ENCODE measurements at regions of chr1 and their contacts with region 1.

Region 1: DNA sequence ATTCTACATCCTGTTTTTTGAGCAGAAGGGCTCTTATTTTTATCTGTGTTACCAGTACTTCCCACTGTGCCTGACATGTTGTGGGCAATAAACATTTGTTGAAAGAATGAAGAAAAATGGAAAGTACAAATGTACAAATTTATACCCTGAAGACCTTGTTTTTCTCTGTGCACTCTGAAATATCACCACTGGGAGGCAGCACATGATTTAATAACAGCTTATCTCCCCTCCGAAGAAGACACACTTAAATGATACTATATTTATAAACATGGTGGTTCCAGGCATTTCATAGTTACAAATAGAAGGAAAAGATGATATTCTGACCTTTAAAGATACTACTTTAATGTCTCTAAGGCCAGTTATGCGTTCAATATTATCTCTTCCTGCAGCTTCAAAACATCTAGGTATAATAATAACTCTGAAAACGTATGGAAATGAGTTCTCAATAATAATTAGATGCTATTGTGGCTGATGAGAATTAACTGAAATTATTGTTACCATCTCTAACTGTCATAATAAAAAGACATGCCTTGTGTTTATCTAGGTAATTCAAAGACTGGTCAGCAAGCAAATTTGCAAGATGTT is 12.8 kb downstream of the DYNLT5 start:
- DNase-seq: peak; percentile 79
- H3K4me3 ChIP-seq: peak overlapping the region; percentile 5
- H3K27ac ChIP-seq: peak overlapping the region; percentile 99
- H3K4me1 ChIP-seq: peaks cover 56% of the 10 kb centered on the region
- CTCF ChIP-seq: peak; percentile 99

Region 2: GRCh38 chr1:66331657-66332547 is 433.2 kb before region 1 on chr1:
- CTCF ChIA-PET with region 1: no interaction called
- POLR2A ChIA-PET with region 1: no interaction called
- intact Hi-C with region 1: loop called (anchors 5 kb)
- DNase-seq: peak; percentile 61
- H3K4me3 ChIP-seq: peak overlapping the region; percentile 77
- H3K27ac ChIP-seq: peak overlapping the region; percentile 93
- H3K4me1 ChIP-seq: peaks cover 71% of the 10 kb centered on the region
- CTCF ChIP-seq: no peak

Region 3: GRCh38 chr1:66831529-66832239 is 66.6 kb after region 1 on chr1:
- CTCF ChIA-PET with region 1: no interaction called
- POLR2A ChIA-PET with region 1: no interaction called
- intact Hi-C with region 1: no loop called
- DNase-seq: no peak
- H3K4me3 ChIP-seq: no peak overlapping the region
- H3K27ac ChIP-seq: no peak overlapping the region
- H3K4me1 ChIP-seq: no peaks in the 10 kb centered on the region
- CTCF ChIP-seq: no peak

Region 4: DNA sequence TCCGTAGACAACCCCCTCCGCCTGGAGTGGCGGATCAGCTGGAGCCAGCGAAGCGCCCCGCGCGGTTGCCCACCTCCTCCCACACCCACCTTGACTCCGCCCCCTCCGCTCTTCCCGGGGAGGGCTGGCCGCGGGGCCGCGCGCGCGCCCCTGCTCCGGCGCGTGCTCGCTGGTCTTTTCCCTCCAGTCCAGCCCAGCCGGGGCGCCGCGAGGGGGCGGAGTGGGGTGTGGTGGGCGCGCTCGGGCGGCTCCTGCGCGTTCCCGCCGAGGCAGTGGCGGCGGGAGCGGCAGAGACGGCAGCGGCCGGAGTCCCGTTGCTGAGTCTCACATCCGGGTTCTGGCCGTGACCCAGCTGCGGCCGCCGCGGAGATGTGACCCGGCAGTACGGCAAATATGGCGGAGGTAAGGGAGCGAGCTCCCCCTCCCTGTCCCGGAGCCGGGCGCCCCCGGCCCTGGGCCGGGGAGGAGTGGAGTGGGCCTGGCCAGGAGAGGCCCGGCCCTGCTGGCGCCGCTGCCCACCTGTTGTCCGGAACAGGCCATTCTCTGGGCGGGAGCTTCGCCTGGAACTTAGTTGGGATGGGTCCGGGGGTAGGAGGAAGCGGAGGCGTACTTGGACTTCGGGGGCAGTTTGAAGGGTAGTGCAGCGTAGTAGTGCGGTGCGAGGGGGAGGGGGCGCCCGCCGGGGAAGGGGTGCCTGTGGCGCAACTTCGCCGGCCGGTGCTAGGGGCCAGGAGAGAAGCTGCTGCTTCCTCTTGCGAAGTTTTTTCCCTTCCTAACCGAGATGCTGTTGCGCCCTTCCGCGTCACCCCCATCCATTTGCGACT is 165.1 kb after region 1 on chr1:
- CTCF ChIA-PET with region 1: no interaction called
- POLR2A ChIA-PET with region 1: interaction called, 9 read pairs
- intact Hi-C with region 1: loop called (anchors 1 kb)
- DNase-seq: peak; percentile 96
- H3K4me3 ChIP-seq: peak overlapping the region; percentile 98
- H3K27ac ChIP-seq: peak overlapping the region; percentile 86
- H3K4me1 ChIP-seq: peaks cover 60% of the 10 kb centered on the region
- CTCF ChIP-seq: peak; percentile 36; the same call in 1 of the 2 replicates

Region 5: GRCh38 chr1:66996018-66996682 is 231.1 kb after region 1 on chr1:
- CTCF ChIA-PET with region 1: no interaction called
- POLR2A ChIA-PET with region 1: interaction called, 3 read pairs
- intact Hi-C with region 1: loop called (anchors 1 kb)
- DNase-seq: peak; percentile 85
- H3K4me3 ChIP-seq: no peak overlapping the region
- H3K27ac ChIP-seq: no peak overlapping the region
- H3K4me1 ChIP-seq: peaks cover 26% of the 10 kb centered on the region
- CTCF ChIP-seq: peak; percentile 97

Region 6: DNA sequence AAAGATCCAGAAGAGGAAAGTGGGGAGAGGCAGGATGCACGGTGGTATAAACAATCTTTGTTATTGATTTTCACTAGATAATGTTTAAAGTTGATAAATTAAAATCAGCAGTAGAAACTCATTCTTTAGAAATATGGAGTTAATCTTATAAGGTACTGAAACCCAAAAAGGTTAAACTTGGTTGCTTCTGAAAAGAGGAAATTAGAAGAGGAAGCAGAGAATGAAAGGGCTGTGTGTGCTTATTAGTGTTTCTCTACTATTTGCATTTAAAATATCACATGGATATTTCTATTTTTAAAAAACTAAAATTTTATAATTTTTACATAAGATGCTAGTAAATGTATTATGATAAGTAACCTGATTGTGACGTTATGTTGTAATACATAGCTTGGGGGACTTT is 345.3 kb after region 1 on chr1:
- CTCF ChIA-PET with region 1: no interaction called
- POLR2A ChIA-PET with region 1: no interaction called
- intact Hi-C with region 1: loop called (anchors 1 kb)
- DNase-seq: peak; percentile 73
- H3K4me3 ChIP-seq: peak overlapping the region; percentile 46
- H3K27ac ChIP-seq: peak overlapping the region; percentile 90
- H3K4me1 ChIP-seq: peaks cover 70% of the 10 kb centered on the region
- CTCF ChIP-seq: no peak

Region 7: GRCh38 chr1:67214420-67215174 is 449.5 kb after region 1 on chr1:
- CTCF ChIA-PET with region 1: interaction called, 3 read pairs
- POLR2A ChIA-PET with region 1: no interaction called
- intact Hi-C with region 1: loop called (anchors 1 kb)
- DNase-seq: peak; percentile 54
- H3K4me3 ChIP-seq: no peak overlapping the region
- H3K27ac ChIP-seq: no peak overlapping the region
- H3K4me1 ChIP-seq: peaks cover 7% of the 10 kb centered on the region
- CTCF ChIP-seq: peak; percentile 85

Region 8: DNA sequence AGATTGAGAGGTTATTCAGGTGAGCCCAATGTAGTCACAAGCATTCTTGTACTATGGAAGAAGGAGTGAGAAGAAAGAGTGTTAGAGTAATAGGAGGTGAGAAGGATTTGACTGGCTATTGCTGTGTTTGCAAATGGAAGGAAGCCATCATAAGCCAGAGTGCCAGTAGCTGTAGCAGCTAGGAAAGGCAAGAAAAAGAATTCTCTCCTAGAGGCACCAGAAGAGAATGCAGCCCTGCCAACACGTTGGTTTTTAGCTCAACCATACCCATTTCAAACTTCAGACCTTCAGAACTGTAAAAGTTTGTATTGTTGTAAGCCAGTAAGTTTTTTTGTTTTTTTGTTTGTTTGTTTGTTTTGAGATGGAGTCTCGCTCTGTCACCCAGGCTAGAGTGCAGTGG is 533.7 kb after region 1 on chr1:
- CTCF ChIA-PET with region 1: no interaction called
- POLR2A ChIA-PET with region 1: no interaction called
- intact Hi-C with region 1: no loop called
- DNase-seq: no peak
- H3K4me3 ChIP-seq: no peak overlapping the region
- H3K27ac ChIP-seq: no peak overlapping the region
- H3K4me1 ChIP-seq: no peaks in the 10 kb centered on the region
- CTCF ChIP-seq: no peak

Region 9: DNA sequence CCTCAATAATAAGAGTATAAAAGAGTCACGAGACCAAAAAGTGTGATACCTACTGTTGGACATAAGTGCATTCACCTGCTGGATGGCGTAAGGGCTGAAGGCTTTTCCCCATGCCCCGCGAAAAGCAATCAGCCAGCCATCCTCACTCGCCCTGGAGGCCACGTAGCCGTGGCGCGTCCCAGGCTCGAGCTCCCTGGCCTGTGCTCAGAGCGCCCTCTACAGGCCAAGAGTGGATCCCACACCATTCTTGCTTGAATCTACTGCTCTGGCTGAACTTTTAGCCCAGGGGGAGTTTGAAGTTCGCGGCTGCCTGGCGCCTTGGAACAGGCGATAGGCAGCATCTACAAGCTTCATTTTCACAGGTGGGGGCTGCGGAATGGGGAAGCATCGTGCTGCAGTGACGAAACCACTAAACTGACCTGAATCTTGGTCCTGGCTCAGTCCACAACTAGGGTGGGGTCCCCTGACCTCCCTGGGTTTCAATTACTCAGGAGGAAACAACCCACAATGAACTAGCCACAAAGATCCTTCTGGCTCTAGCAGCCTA is 735.4 kb after region 1 on chr1:
- CTCF ChIA-PET with region 1: no interaction called
- POLR2A ChIA-PET with region 1: no interaction called
- intact Hi-C with region 1: loop called (anchors 10 kb)
- DNase-seq: peak; percentile 89
- H3K4me3 ChIP-seq: no peak overlapping the region
- H3K27ac ChIP-seq: no peak overlapping the region
- H3K4me1 ChIP-seq: no peaks in the 10 kb centered on the region
- CTCF ChIP-seq: peak; percentile 97